ENCODE measurements at regions of chr1 and their contacts with region 1.

Region 1: GRCh38 chr1:109090196-109091077 is at the start of gene TMEM167B:
- DNase-seq: peak; percentile 93
- ATAC-seq: peak; percentile 92
- H3K4me3 Mint-ChIP-seq: peak within 1 kb of the TSS; percentile 88
- H3K27ac Mint-ChIP-seq: peak within 1 kb of the TSS; percentile 95
- H3K4me1 Mint-ChIP-seq: peaks cover 33% of the 10 kb centered on the region
- H3K27me3 Mint-ChIP-seq: no peaks in the 10 kb centered on the region
- total RNA-seq, gene TMEM167B: 20.8 to 21.2 TPM

Region 2: GRCh38 chr1:109050266-109050995 is 40.0 kb before region 1 on chr1:
- CTCF ChIA-PET with region 1: no interaction called
- POLR2A ChIA-PET with region 1: no interaction called
- DNase-seq: no peak
- ATAC-seq: no peak
- H3K4me3 Mint-ChIP-seq: no peak overlapping the region
- H3K27ac Mint-ChIP-seq: no peak overlapping the region
- H3K4me1 Mint-ChIP-seq: peaks cover 2% of the 10 kb centered on the region
- H3K27me3 Mint-ChIP-seq: peaks cover 16% of the 10 kb centered on the region

Region 3: GRCh38 chr1:109075531-109076490 is 14.6 kb before region 1 on chr1 and contains the start of gene TAF13:
- CTCF ChIA-PET with region 1: interaction called, 6 read pairs
- POLR2A ChIA-PET with region 1: interaction called, 14 read pairs
- DNase-seq: peak; percentile 91
- ATAC-seq: peak; percentile 99
- H3K4me3 Mint-ChIP-seq: peak within 1 kb of the TSS; percentile 99
- H3K27ac Mint-ChIP-seq: peak within 1 kb of the TSS; percentile 99
- H3K4me1 Mint-ChIP-seq: peaks cover 20% of the 10 kb centered on the region
- H3K27me3 Mint-ChIP-seq: no peaks in the 10 kb centered on the region
- total RNA-seq, gene TAF13: 24.5 to 24.6 TPM

Measured in activated CD8-positive, alpha-beta T cell treated with anti-CD3 and anti-CD28 coated beads, Interleukin-2, amount 10 ng/mL, durations not matched to agents 7 days and 5 days (primary cell).